Lower lobe of right lung (tissue), 2 donors: ENCODE measurements at regions of chr20 and their contacts with region 1.

Region 1: GRCh38 chr20:40986774-40987173 is 41.8 kb upstream of the TOP1 start:
- DNase-seq: no peak
- ATAC-seq: no peak
- H3K4me3 ChIP-seq: no peak overlapping the region
- H3K27ac ChIP-seq: no peak overlapping the region
- H3K4me1 ChIP-seq: peaks cover 11% of the 10 kb centered on the region
- H3K27me3 ChIP-seq: no peaks in the 10 kb centered on the region
- CTCF ChIP-seq: no peak

Region 2: DNA sequence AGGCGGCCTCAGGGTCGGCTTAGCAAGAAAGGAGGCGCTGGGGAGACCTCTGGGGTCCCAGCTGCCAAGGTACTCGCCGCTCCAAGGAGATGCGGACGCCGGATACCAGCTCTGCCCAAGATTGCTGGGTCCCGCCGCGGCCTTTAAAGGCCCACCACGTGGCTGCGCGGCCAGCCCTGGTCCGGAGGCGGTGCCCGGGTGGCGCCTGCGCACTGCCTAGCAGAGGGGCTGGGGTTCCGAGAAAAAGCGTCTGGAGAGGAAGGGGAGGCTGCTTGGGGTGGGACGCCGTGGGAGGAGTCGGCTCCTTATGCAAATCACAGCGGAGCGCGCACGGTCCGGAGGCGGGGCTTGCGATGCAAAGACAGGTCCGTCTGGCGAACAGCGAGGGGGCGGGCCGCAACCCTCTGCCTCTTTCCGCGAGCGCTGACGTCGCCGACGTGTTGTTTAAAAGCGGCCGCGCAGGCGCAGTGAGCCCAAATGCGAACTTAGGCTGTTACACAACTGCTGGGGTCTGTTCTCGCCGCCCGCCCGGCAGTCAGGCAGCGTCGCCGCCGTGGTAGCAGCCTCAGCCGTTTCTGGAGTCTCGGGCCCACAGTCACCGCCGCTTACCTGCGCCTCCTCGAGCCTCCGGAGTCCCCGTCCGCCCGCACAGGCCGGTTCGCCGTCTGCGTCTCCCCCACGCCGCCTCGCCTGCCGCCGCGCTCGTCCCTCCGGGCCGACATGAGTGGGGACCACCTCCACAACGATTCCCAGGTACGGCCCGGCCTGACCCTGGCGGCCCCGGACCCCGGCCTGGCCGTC is 41.8 kb after region 1 on chr20 and contains the start of gene TOP1:
- intact Hi-C with region 1: no loop called
- DNase-seq: peak; percentile 100
- ATAC-seq: peak; percentile 97 to 99
- H3K4me3 ChIP-seq: peak within 1 kb of the TSS; percentile 96
- H3K27ac ChIP-seq: peak within 1 kb of the TSS; percentile 100
- H3K4me1 ChIP-seq: peaks cover 45% of the 10 kb centered on the region
- H3K27me3 ChIP-seq: no peaks in the 10 kb centered on the region
- CTCF ChIP-seq: no peak
- total RNA-seq, gene TOP1: 52.0 TPM

Region 3: GRCh38 chr20:41081276-41081814 is 94.6 kb after region 1 on chr20:
- intact Hi-C with region 1: loop called (anchors 5 kb)
- DNase-seq: no peak
- ATAC-seq: no peak
- H3K4me3 ChIP-seq: no peak overlapping the region
- H3K27ac ChIP-seq: no peak overlapping the region
- H3K4me1 ChIP-seq: peaks cover 35% of the 10 kb centered on the region
- H3K27me3 ChIP-seq: no peaks in the 10 kb centered on the region
- CTCF ChIP-seq: no peak

Region 4: DNA sequence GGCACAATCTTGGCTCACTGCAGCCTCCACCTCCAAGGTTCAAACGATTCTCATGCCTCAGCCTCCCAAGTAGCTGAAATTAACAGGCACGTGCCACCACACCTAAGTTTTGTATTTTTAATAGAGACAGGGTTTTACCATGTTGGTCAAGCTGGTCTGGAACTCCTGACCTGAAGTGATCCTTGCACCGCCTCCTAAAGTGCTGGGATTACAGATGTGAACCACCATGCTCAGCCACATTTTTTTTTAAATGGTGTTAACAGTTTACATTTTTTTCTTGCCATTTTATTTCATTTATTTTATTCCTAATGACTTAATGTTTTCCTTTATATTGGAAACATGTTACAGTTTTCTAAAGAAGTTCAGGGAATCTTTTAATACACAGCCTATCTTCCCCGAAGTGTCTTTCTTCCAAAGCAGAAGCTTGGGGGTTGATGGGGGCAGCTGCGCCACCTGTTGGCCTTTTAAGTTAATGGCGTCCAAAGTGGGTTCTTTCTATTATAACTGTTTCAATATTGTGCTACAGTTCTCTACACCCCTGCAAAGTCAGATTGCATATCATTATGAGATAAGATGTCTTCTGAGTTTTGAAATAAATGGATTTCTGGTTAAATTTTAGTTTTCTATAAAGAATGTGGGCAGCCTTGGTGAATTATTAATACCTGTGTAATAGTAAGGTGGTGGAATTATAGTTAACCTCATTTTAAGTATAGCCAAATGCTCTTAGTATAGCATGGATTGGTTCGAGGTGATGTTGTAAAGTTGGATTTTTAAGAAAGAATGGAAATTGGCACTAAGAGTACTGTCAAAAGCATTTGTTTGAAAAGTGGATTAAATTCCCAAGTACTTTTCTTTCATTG is 108.6 kb after region 1 on chr20:
- intact Hi-C with region 1: loop called (anchors 5 kb)
- DNase-seq: peak; percentile 65
- ATAC-seq: peak; percentile 78 to 81
- H3K4me3 ChIP-seq: no peak overlapping the region
- H3K27ac ChIP-seq: peak overlapping the region; percentile 1
- H3K4me1 ChIP-seq: peaks cover 13% of the 10 kb centered on the region
- H3K27me3 ChIP-seq: no peaks in the 10 kb centered on the region
- CTCF ChIP-seq: peak; percentile 86